ENCODE measurements at regions of chr10 and their contacts with region 1.

Region 1: DNA sequence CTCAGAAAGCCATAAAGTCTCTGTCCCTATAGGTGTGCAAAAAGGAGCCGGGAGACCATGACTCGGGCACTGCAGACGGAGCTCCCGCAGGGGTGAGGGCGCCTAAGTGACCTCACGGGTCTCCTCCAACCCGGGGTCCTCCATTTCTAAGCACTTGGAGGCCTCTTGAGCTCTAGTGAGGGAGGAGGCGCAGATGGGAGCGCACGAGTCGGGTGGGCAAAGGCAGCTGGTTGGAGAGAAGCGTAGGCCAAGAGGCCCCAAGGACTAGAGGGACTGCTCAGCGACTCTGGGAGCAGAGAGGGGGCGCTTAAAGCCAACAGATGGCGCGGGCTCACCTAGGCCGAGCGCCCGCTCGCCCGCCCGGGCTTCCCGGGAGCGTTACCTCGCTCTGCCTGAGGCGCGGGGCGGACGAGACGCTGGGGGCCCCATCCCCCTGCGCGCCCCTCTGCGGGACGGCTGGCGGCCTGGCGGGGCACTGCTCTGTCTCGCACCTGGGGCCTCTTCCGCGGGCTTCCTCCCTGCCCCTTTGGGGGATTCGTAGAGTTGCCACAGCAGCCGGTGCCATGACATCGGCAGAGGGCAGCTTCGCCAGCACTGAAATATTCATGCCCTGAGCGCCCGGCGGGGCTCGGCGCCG is 518 bp upstream of the CDH23 start:
- DNase-seq: peak; percentile 60 to 79
- H3K4me3 ChIP-seq: peak overlapping the region; percentile 54 to 86 (median 62)
- H3K27ac ChIP-seq: no peak overlapping the region
- H3K4me1 ChIP-seq: peaks cover 0 to 18% (median 10%) of the 10 kb centered on the region in 4 experiments; a peak in 6 of 7 replicates
- H3K27me3 ChIP-seq: peaks cover 15 to 50% (median 40%) of the 10 kb centered on the region in 4 experiments
- CTCF ChIP-seq: peak; percentile 55 to 84 (median 71)
- EP300 ChIP-seq: no peak
- POLR2A ChIP-seq: no peak
- RAD21 ChIP-seq: peak; percentile 84 to 88

Region 2: DNA sequence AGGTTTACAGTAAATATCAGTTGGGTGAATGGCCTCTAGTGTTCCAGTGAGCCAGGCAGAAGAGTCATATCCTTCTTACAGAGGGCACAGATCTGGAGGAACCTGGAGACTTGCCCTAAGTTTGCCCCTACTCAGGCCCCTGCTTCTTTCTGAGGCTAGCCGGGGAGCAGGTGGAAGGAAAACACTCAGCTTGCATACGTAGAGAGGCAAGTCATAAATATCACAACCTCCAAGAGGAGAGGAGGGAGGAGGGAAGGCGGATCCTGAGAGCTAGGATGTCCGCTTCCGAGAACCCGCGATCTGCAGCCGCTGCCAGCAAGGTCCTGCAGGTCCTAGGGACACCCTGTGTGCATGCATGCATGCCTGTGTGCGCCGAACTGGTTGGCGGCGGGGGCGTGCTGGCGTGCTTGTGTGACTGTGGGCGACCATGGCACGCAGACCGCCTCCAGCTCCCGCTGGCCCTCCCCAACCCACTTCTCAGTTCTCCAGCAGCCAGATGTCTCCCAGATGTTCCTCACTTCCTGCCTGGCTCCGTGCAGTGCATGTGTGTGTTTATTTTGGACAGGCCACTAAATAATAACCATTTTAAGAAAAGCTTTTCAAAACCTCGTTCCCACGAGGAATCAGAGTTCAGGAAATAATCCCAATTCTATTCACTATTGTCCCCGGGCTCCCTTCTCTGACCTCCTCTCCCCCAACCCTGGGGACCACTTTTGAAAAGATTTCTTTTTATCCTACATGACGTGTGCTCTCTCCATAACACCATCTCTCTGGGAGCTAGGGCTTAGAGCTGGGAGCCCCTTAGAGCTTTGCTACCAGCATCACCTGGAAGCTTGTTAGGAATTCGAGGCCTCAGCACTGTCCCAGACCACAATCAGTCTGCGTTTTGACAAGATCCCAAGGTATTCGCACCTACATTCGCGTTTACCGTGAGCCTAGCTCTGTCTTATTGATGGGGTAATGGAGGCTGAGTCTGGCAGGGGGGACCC is 151.5 kb before region 1 on chr10:
- CTCF ChIA-PET with region 1: no interaction called
- POLR2A ChIA-PET with region 1: no interaction called
- DNase-seq: no peak
- H3K4me3 ChIP-seq: no peak overlapping the region
- H3K27ac ChIP-seq: no peak overlapping the region
- H3K4me1 ChIP-seq: peaks cover 0 to 1% (median 0%) of the 10 kb centered on the region in 4 experiments; a peak in 2 of 7 replicates
- H3K27me3 ChIP-seq: no peaks in the 10 kb centered on the region; a peak in 1 of 7 replicates
- CTCF ChIP-seq: no peak
- EP300 ChIP-seq: no peak
- POLR2A ChIP-seq: no peak
- RAD21 ChIP-seq: no peak

Region 3: GRCh38 chr10:71351628-71352319 is 44.4 kb before region 1 on chr10:
- CTCF ChIA-PET with region 1: no interaction called
- POLR2A ChIA-PET with region 1: no interaction called
- DNase-seq: no peak
- H3K4me3 ChIP-seq: no peak overlapping the region
- H3K27ac ChIP-seq: no peak overlapping the region
- H3K4me1 ChIP-seq: peaks cover 0 to 16% (median 7%) of the 10 kb centered on the region in 4 experiments; a peak in 4 of 7 replicates
- H3K27me3 ChIP-seq: no peaks in the 10 kb centered on the region
- CTCF ChIP-seq: no peak
- EP300 ChIP-seq: no peak
- POLR2A ChIP-seq: no peak
- RAD21 ChIP-seq: no peak

Region 4: DNA sequence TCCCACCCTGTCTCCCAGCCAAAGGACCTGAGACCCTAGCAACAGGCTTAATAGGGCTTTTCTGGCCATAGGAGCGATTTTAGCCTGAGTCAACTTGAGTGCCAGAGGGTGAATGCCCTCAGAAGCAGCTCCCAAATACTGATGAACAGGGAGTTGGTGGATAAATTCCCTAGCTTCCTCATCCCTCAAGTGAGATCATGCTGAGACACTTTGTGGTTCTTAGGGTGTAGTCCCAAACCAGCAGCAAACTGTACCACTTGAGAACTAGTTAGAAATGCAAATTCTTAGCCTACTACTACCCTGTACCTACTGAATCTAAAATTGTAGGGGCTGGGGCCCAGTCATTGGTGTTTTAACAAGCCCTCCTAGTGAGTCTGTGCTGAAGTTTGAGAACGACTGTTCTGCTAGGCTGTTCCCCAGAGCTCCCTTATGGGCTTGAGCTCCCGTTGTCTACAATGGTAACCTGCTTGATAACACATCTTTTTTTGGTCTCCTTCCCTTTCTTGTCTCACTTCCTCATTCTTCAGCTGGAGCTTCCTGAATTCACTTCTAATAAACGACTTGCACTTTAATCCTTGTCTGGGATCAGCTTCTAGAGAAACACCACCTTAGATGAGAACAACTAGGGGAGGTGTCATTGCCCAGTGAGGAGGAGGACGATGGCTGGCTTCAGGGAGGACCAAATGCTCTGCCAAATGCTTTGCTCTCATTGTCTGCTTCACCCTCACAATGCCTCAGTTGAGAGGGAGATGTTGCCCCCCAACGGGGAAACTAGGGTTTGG is 17.7 kb before region 1 on chr10:
- CTCF ChIA-PET with region 1: interaction called, 74 read pairs
- POLR2A ChIA-PET with region 1: interaction called, 3 read pairs
- DNase-seq: no peak
- H3K4me3 ChIP-seq: no peak overlapping the region
- H3K27ac ChIP-seq: no peak overlapping the region
- H3K4me1 ChIP-seq: peaks cover 0 to 2% (median 0%) of the 10 kb centered on the region in 4 experiments; a peak in 2 of 7 replicates
- H3K27me3 ChIP-seq: no peaks in the 10 kb centered on the region
- CTCF ChIP-seq: no peak
- EP300 ChIP-seq: no peak
- POLR2A ChIP-seq: no peak
- RAD21 ChIP-seq: no peak

Region 5: GRCh38 chr10:71431239-71432100 is 35.3 kb after region 1 on chr10:
- CTCF ChIA-PET with region 1: interaction called, 70 read pairs
- POLR2A ChIA-PET with region 1: no interaction called
- DNase-seq: peak in 1 of 2 experiments; percentile 58
- H3K4me3 ChIP-seq: no peak overlapping the region
- H3K27ac ChIP-seq: no peak overlapping the region
- H3K4me1 ChIP-seq: peaks cover 0 to 2% (median 0%) of the 10 kb centered on the region in 4 experiments; a peak in 2 of 7 replicates
- H3K27me3 ChIP-seq: no peaks in the 10 kb centered on the region
- CTCF ChIP-seq: peak; percentile 36 to 62 (median 54)
- EP300 ChIP-seq: no peak
- POLR2A ChIP-seq: no peak
- RAD21 ChIP-seq: peak in 1 of 2 experiments; percentile 38; a peak in 2 of 4 replicates

Region 6: DNA sequence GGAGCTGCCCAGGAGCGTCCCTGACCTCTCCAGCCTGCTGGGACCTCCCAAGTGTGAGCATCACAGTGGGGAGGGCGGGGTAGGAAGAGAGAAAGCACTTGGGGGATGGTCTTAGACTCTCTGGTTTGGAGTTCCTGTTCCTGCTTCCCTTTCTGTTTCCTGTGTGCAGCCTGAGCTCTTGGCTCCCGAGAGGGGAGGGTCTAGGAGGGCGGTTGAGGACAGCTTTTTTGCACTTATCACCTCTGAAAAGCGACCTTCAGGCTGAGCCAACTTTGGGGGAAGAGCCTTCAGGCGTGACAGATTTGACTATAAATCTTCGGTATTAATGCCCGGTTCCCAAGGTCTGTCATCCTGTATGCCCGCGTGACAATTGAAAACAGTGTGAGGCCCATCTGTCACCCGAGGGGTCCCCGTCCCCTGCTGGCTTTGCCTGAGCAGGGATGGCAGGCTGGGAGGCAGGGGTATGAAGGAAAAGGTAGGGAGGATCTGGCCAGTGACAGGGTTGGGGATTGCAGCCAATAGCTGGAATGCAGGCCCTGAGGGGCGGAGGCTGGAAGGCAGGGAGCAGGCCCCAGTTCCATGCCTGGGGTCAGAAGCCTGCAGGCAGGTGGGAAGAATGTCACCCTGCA is 79.2 kb after region 1 on chr10:
- CTCF ChIA-PET with region 1: interaction called, 21 read pairs
- POLR2A ChIA-PET with region 1: interaction called, 3 read pairs
- DNase-seq: no peak
- H3K4me3 ChIP-seq: no peak overlapping the region
- H3K27ac ChIP-seq: no peak overlapping the region
- H3K4me1 ChIP-seq: peaks cover 0 to 14% (median 6%) of the 10 kb centered on the region in 4 experiments; a peak in 6 of 7 replicates
- H3K27me3 ChIP-seq: no peaks in the 10 kb centered on the region
- CTCF ChIP-seq: peak in 1 of 3 experiments; percentile 2; a peak in 1 of 4 replicates
- EP300 ChIP-seq: no peak
- POLR2A ChIP-seq: no peak; a peak in 1 of 3 replicates
- RAD21 ChIP-seq: no peak

Region 7: DNA sequence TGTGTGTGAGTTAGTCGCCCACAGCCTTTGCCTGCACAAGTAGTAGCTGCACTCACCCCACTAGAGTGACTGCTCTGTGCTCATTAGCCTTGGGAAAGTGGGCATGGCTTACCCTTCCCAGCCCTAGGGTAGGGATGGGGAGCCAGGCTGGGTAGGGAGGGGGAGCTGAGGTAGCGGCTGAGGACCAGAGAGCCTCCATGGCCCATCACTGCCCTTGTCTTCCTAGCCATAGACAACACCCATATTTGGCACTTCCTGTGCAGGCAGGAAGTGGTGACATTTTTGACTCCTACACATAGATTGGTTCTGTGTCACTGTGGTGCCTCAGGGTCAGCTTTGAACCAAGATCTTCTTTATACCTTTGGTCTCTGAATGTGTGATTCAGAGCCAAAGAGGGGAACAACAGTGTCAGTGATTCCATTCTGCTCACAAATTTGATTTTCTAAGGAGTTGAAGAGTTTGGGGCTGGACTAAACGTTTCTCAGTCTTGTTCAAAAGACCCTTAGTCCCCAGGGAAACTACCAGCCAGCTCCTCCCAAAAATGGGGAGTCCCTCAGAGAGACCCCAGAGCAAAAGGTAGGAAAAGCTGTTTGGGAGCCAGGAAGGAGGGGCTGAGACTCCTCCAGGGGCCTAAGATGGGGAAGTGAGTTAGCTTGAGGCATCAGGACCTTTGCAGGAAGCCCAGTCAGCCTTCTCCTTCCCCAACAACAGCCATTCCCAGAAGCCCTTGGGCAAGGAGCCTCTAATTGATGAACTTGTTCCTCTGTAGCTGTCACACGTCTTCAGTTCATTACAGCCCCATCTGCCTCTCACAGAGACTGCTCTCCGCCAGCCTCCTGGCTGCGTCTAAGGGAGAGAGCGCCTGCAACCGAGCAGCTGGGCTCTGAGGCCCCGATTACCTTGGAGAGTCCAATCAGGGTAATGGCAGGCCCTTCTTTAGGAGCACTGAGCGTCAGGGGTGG is 135.6 kb after region 1 on chr10:
- CTCF ChIA-PET with region 1: interaction called, 10 read pairs
- POLR2A ChIA-PET with region 1: no interaction called
- DNase-seq: no peak
- H3K4me3 ChIP-seq: no peak overlapping the region
- H3K27ac ChIP-seq: no peak overlapping the region
- H3K4me1 ChIP-seq: peaks cover 4 to 20% (median 16%) of the 10 kb centered on the region in 4 experiments
- H3K27me3 ChIP-seq: no peaks in the 10 kb centered on the region
- CTCF ChIP-seq: no peak
- EP300 ChIP-seq: no peak
- POLR2A ChIP-seq: no peak
- RAD21 ChIP-seq: no peak